Astrocyte of the cerebellum (primary cell): ENCODE measurements at regions of chr3 and their contacts with region 1.

Region 1: GRCh38 chr3:61561374-61562041 is at the start of gene PTPRG:
- DNase-seq: peak; percentile 92
- H3K4me3 ChIP-seq: peak within 1 kb of the TSS; percentile 93
- CTCF ChIP-seq: no peak

Region 2: DNA sequence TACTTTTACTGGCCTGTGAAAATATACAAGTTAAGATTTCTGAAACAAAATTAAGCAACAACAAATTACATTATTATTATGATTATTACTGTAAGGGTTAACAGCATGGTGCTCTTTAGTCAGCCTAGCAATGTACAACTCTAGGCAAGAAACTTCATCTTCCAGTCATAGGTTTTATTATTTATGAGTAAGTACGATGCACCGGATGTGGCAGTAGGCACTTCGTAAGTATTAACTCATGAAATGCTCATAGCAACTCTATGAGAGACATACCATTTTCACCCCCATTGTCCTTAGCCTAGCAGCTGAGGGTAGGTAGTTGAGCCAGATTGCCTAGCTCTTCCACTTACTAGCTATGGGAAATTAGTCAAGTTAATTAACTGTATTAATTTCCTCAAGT is 68.2 kb before region 1 on chr3:
- in situ Hi-C with region 1: no loop called
- DNase-seq: no peak
- H3K4me3 ChIP-seq: no peak overlapping the region
- CTCF ChIP-seq: no peak

Region 3: DNA sequence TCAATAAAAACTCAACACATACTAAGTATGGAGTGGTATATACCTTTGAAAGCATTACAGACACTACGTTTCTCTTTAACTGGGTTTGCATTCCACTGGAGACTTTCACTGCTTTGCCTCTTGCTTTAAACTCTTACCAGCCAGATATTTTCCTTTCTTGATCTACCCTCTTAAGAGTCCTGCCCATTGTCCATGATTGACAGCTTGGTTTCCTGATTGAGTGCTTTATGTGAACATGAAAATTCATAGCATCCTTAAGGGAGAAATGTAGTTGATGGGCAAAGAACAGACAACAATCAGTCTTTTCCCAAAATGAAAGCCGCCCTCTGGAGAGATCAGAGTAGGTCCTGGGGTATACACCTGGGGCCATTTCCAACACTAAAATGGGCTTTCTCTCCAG is 78.5 kb after region 1 on chr3:
- in situ Hi-C with region 1: loop called (anchors 5 kb)
- DNase-seq: no peak
- H3K4me3 ChIP-seq: no peak overlapping the region
- CTCF ChIP-seq: no peak

Region 4: GRCh38 chr3:61783993-61784718 is 222.6 kb after region 1 on chr3:
- in situ Hi-C with region 1: no loop called
- DNase-seq: peak; percentile 64
- H3K4me3 ChIP-seq: no peak overlapping the region
- CTCF ChIP-seq: no peak

Region 5: DNA sequence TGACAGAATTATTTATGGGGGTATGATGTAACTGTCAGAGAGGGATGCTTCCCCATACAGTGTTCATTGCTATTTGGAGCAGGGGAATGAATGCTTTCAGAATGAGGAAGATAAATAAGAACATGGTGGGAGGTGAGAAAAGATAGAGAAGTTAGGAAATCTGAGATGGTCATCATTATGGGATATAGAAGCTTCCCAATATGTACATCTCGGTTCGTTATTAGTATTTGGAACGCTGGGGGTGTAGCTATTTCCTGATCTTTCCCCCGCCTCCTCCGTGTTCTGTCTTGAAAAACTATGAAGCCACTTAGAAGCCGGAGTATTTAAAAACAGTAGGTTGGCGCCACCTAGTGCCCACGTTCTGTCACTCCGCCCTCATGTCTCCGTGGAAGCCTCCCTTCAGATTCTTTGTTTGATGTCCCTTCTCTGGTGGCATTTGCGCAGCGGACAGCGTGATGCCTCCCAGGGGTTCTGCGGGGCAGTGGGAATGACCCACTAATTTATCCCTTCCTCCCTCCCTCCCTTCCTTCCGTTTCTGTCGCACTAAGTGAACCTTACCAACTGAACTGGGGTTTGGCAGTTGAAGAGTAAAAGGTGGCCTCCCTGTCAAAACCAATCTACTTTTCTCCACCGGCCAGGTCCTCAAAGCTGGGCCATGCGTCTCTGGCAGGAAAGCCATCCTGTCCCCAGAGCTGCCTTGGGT is 627.3 kb after region 1 on chr3:
- in situ Hi-C with region 1: loop called (anchors 10 kb)
- DNase-seq: peak; percentile 66
- H3K4me3 ChIP-seq: no peak overlapping the region
- CTCF ChIP-seq: peak; percentile 71